H1 (cell line): ENCODE measurements at regions of chr17 and their contacts with region 1.

Region 1: GRCh38 chr17:66915204-66916096 is 49.1 kb upstream of the CACNG4 start:
- DNase-seq: no peak
- H3K4me3 ChIP-seq: no peak overlapping the region
- H3K27ac ChIP-seq: no peak overlapping the region
- H3K4me1 ChIP-seq: no peaks in the 10 kb centered on the region
- H3K27me3 ChIP-seq: no peaks in the 10 kb centered on the region
- CTCF ChIP-seq: peak; percentile 57 to 67 (median 60)
- EP300 ChIP-seq: no peak
- POLR2A ChIP-seq: no peak
- RAD21 ChIP-seq: peak; percentile 68 to 80

Region 2: GRCh38 chr17:66727639-66728570 is 187.5 kb before region 1 on chr17:
- CTCF ChIA-PET with region 1: interaction called, 15 read pairs
- POLR2A ChIA-PET with region 1: no interaction called
- DNase-seq: peak; percentile 31 to 78
- H3K4me3 ChIP-seq: no peak overlapping the region
- H3K27ac ChIP-seq: no peak overlapping the region
- H3K4me1 ChIP-seq: peaks cover 9 to 26% (median 18%) of the 10 kb centered on the region in 4 experiments
- H3K27me3 ChIP-seq: no peaks in the 10 kb centered on the region
- CTCF ChIP-seq: peak; percentile 82 to 92 (median 88)
- EP300 ChIP-seq: no peak
- POLR2A ChIP-seq: no peak
- RAD21 ChIP-seq: peak; percentile 85 to 93

Region 3: DNA sequence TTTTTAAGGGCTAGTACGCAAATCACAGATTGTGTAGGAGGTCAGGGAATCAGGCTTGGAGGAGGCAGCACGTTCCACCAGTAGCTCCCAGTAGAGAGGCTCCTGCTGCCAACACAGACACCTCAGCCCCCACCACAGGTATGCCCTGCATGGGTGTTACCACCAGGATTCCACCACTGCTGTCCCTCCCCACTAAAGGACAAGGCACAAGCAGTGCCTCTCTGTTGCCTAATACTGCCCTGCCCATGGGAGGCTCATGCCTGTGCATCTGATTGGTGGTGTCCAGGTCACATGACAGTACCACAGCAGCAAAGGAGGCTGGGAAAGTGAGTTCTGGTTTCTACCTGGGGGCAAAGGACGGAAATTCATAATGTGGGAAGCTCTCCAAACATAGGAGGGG is 15.5 kb after region 1 on chr17:
- CTCF ChIA-PET with region 1: interaction called, 15 read pairs
- POLR2A ChIA-PET with region 1: no interaction called
- DNase-seq: peak in 1 of 2 experiments; percentile 56
- H3K4me3 ChIP-seq: no peak overlapping the region
- H3K27ac ChIP-seq: no peak overlapping the region
- H3K4me1 ChIP-seq: no peaks in the 10 kb centered on the region
- H3K27me3 ChIP-seq: no peaks in the 10 kb centered on the region
- CTCF ChIP-seq: no peak
- EP300 ChIP-seq: no peak
- POLR2A ChIP-seq: no peak
- RAD21 ChIP-seq: no peak

Region 4: GRCh38 chr17:66944351-66945139 is 29.1 kb after region 1 on chr17:
- CTCF ChIA-PET with region 1: interaction called, 23 read pairs
- POLR2A ChIA-PET with region 1: interaction called, 3 read pairs
- DNase-seq: no peak
- H3K4me3 ChIP-seq: no peak overlapping the region
- H3K27ac ChIP-seq: no peak overlapping the region
- H3K4me1 ChIP-seq: peaks cover 1 to 10% (median 4%) of the 10 kb centered on the region in 4 experiments; a peak in 4 of 7 replicates
- H3K27me3 ChIP-seq: 0 out of 7 replicates have a peak, but pooled peaks cover 0 to 3% (median 0%) of the 10 kb centered on the region in 4 experiments
- CTCF ChIP-seq: no peak
- EP300 ChIP-seq: no peak
- POLR2A ChIP-seq: no peak
- RAD21 ChIP-seq: no peak

Region 5: DNA sequence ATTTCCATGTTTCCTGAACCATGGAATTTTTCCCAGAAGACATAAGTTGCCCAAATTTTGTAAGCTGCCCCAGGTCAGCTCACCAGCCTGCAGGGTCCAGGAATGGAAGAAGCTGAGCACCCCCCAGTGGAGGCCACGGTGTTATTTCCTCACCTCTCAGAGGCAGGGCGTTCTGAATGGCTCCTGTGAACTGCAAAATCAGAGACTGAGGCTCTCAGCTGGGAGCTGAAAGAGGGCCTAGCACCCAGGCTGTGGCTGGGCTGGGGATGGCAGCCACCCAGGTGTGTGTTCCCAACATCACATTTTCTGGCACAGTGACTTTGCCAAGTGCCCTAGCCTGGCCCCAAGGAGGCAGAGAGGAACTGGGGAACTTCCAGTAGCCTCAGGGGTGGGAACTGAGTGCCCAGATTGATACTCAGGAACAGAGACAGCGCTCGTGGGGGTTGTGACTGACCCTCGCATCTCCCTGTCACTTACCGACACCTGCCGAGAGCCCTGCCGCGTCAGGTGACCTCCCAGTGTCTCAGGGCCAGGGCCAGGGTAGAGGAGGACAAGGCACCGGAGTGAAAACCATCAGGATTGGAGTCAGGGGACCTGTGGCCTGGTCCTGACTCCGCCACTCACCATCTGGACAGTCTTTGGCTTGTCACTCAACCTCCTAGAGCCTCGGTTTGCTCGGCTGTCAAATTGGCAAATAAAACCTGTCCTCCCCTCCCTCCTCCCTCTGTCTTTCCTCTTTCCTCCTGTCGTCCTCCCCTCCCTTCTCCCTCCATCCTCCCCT is 60.3 kb after region 1 on chr17:
- CTCF ChIA-PET with region 1: interaction called, 29 read pairs
- POLR2A ChIA-PET with region 1: no interaction called
- DNase-seq: peak in 1 of 2 experiments; percentile 69
- H3K4me3 ChIP-seq: no peak overlapping the region
- H3K27ac ChIP-seq: no peak overlapping the region
- H3K4me1 ChIP-seq: peaks cover 0 to 2% (median 1%) of the 10 kb centered on the region in 4 experiments; a peak in 2 of 7 replicates
- H3K27me3 ChIP-seq: no peaks in the 10 kb centered on the region
- CTCF ChIP-seq: peak; percentile 49 to 75 (median 67)
- EP300 ChIP-seq: no peak
- POLR2A ChIP-seq: no peak
- RAD21 ChIP-seq: peak; percentile 83 to 91